Left colon (tissue), 2 donors: ENCODE measurements at regions of chr22 and their contacts with region 1.

Region 1: DNA sequence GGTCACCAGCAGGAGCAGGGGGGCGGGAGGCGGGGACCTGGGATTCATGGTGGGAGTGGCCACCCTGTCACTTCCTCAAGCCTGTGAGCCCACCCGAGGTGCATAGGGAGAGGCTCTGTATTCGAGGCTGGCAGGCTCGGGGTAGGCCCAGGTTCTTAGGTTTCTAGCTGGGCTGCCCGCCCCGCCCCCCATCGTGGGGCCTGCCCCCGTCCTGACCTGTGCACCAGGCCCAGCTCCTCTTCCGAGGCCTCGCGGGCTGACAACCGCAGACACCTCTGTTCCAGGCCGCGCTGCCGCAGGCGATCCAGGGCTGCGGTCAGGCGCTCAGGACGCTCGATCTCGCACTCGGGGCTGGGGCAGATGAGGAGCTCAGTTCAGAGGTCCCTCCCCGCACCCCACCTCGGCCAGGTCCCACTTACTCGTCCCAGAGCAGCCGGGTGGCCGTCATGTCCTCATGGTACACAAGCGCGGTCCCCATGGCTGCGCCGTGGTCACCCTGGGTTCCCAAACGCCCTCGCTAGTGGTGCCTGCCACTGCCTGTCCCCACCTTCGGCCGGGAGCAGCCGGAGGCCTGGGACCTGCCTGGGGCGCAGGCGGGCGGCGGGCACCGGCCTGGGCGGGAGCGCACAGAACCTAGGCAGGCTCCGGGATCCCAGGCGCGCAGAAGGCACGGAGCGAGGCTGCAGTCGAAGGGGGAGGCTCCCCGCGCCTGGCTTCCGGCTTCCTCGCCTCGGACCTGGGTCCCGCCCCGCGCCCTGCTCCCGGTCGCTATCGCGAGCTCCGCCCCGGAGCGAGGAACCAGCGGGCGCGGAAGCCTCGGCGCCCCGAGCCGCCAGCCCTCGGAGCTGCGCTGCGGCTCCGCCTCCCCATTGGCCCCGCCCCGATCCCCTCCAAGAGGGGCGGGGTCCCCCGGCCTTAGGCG is at the start of gene HDAC10:
- DNase-seq: peak; percentile 84 to 91
- ATAC-seq: peak; percentile 85
- total RNA-seq, gene HDAC10: 48.3 to 49.2 TPM

Region 2: GRCh38 chr22:49970528-49971231 is 280.1 kb before region 1 on chr22:
- intact Hi-C with region 1: no loop called
- DNase-seq: peak; percentile 95 to 99
- ATAC-seq: peak; percentile 81

Region 3: GRCh38 chr22:50341977-50342650 is 91.3 kb after region 1 on chr22:
- intact Hi-C with region 1: loop called in 1 of 2 experiments (anchors 5 kb)
- DNase-seq: peak; percentile 84 to 92
- ATAC-seq: peak; percentile 75